Endothelial cell of umbilical vein (primary cell): ENCODE measurements at regions of chr12 and their contacts with region 1.

Region 1: DNA sequence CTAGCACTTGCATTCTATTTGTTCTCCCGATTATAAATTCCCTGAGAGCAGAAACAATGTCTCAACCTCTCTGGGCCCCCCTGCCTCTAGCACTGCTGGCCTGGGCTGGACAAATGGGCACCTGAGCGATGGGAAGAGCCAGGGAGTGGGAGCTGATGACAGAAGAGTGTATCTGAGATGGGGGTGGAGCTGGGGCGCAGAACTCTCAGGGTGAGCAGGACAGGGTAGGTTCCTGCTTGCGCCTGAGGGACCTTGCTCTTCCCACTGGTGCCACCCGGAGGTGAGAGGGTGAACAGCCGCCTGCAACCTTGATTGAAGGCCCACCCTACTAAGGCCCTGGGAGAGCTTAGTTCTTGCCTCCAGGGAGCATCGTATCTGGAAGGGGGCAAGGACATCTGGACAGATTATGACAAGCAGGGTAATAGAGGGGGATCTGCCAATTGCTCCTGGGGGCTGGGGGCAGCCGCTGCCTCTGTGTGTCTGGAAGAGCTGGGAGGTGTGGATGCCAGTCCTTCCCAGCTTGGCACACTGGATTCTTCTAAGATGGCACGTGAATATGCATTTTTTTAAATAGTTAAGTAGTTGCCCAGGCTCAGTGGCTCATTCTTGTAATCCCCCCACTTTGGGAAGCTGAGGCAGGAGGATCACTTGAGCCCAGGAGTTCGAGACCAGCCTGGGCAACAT is 43.0 kb upstream of the TSPAN9 start:
- DNase-seq: peak; percentile 78
- H3K4me3 ChIP-seq: no peak overlapping the region
- H3K27ac ChIP-seq: no peak overlapping the region
- H3K4me1 ChIP-seq: peaks cover 21% of the 10 kb centered on the region
- H3K27me3 ChIP-seq: no peaks in the 10 kb centered on the region
- CTCF ChIP-seq: peak; percentile 76 to 90
- POLR2A ChIP-seq: no peak

Region 2: GRCh38 chr12:1197264-1198018 is 1836.8 kb before region 1 on chr12:
- CTCF ChIA-PET with region 1: no interaction called
- POLR2A ChIA-PET with region 1: no interaction called
- dilution Hi-C with region 1: no loop called
- intact Hi-C with region 1: no loop called
- DNase-seq: no peak
- H3K4me3 ChIP-seq: no peak overlapping the region
- H3K27ac ChIP-seq: no peak overlapping the region
- H3K4me1 ChIP-seq: peaks cover 5% of the 10 kb centered on the region
- H3K27me3 ChIP-seq: no peaks in the 10 kb centered on the region
- CTCF ChIP-seq: no peak
- POLR2A ChIP-seq: no peak

Region 3: DNA sequence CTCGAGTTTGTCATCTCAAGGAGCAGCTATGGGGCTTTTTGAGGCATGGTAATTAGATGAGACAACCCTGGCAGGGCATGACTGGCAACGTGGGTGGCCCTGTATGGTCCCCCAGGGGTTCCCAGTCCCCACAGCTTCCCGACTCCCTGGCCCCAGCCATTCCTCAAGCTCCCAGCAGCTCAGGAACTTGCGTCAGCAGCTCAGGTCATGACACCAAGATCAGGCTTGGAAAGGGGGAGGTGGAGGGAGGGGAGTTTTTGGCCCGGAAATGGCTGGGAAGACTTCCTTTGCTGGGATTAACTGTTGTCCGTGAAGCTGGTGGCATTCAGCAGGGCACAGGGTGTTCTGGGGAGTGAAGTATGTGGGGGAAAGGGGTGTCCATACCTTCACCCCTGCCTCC is 188.9 kb before region 1 on chr12:
- CTCF ChIA-PET with region 1: interaction called, 20 read pairs
- POLR2A ChIA-PET with region 1: no interaction called
- dilution Hi-C with region 1: no loop called
- intact Hi-C with region 1: no loop called
- DNase-seq: peak; percentile 74
- H3K4me3 ChIP-seq: no peak overlapping the region
- H3K27ac ChIP-seq: peak overlapping the region; percentile 75
- H3K4me1 ChIP-seq: peaks cover 23% of the 10 kb centered on the region
- H3K27me3 ChIP-seq: no peaks in the 10 kb centered on the region
- CTCF ChIP-seq: no peak
- POLR2A ChIP-seq: peak; percentile 65

Region 4: GRCh38 chr12:2877047-2877952 is 156.9 kb before region 1 on chr12 and contains the starts of genes FOXM1 and RHNO1:
- CTCF ChIA-PET with region 1: interaction called, 21 read pairs
- POLR2A ChIA-PET with region 1: no interaction called
- dilution Hi-C with region 1: no loop called
- intact Hi-C with region 1: loop called (anchors 1 kb)
- DNase-seq: peak; percentile 90
- H3K4me3 ChIP-seq: peak within 1 kb of the TSS; percentile 56 to 99 (median 99)
- H3K27ac ChIP-seq: peak within 1 kb of the TSS; percentile 88
- H3K4me1 ChIP-seq: peaks cover 17% of the 10 kb centered on the region
- H3K27me3 ChIP-seq: no peaks in the 10 kb centered on the region
- CTCF ChIP-seq: peak in 1 of 2 donors; percentile 24
- POLR2A ChIP-seq: peak; percentile 81
- total RNA-seq, gene FOXM1: 110 and 136 TPM in 2 replicates
- total RNA-seq, gene RHNO1: 33.8 and 39.9 TPM in 2 replicates

Region 5: DNA sequence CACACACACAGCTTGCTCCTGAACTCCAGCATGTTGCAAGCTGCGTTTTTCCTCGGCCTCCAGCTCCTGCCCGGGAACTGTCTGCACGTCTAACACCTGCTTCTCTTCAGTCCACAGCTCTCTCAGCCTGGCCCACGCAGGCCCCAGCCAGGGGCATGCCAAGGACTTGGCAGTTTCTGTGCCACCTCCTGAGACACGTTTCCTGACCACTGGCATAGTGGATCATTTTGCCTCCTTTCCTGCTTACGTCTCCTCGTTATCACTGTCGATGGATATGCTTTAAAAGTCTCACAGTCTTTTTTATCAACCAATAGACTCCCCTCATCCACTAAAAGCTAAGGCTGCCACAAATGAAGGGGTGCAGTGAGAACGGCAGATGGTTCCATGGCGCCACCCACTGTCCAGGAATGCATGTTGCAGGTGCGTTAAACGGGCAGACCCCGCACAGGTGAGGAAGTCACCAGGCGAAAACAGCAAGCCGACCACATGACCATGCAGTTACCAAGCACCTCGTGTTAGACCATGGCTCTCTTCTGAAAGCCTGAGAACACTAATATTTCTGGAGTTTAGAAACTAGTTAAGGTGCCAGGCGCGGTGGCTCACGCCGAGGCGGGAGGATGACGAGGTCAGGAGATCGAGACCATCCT is 89.7 kb before region 1 on chr12:
- CTCF ChIA-PET with region 1: interaction called, 21 read pairs
- POLR2A ChIA-PET with region 1: no interaction called
- dilution Hi-C with region 1: no loop called
- intact Hi-C with region 1: loop called (anchors 5 kb)
- DNase-seq: peak; percentile 51
- H3K4me3 ChIP-seq: peak overlapping the region in 1 of 3 experiments; percentile 25
- H3K27ac ChIP-seq: no peak overlapping the region
- H3K4me1 ChIP-seq: peaks cover 3% of the 10 kb centered on the region
- H3K27me3 ChIP-seq: no peaks in the 10 kb centered on the region
- CTCF ChIP-seq: peak; percentile 67 to 84
- POLR2A ChIP-seq: no peak

Region 6: DNA sequence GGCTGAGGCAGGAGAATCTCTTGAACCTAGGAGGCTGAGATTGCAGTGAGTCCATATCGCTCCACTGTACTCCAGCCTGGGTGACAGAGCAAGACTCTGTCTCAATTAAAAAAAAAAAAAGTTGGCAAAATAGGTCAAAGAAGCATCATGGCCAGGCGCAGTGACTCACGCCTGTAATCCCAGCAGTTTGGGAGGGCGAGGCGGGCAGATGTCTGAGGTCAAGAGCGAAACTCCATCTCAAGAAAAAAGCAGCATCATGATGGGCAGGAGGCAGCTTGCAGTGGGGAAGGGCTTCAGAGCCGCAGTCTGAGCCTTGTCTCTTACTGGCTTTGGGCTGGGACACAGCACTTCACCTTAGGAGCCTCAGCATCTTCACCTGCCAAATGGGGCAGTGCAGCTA is 53.6 kb before region 1 on chr12:
- CTCF ChIA-PET with region 1: no interaction called
- POLR2A ChIA-PET with region 1: no interaction called
- dilution Hi-C with region 1: no loop called
- intact Hi-C with region 1: no loop called
- DNase-seq: no peak
- H3K4me3 ChIP-seq: no peak overlapping the region
- H3K27ac ChIP-seq: no peak overlapping the region
- H3K4me1 ChIP-seq: no peaks in the 10 kb centered on the region
- H3K27me3 ChIP-seq: no peaks in the 10 kb centered on the region
- CTCF ChIP-seq: no peak
- POLR2A ChIP-seq: no peak

Region 7: DNA sequence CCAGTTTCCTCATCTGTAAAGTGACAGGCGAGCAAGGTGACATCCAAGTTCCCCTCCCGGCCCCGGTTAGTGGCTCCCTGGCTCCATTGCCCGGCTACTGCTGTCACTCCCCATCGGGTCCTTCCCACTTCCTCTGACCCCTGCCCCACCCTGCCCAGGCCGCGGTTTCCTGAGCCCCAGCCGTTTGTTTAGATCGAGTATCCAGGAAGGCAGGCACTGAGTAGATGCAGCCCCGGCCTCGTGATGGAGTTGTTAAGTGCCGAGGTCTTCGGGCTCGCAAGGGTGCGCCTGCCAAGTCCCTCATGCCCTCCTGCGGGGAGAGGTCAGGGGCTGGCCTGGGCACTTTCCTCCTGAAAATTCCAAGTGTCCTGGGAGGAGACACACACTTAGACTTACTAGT is 19.6 kb before region 1 on chr12:
- CTCF ChIA-PET with region 1: interaction called, 3 read pairs
- POLR2A ChIA-PET with region 1: no interaction called
- dilution Hi-C with region 1: no loop called
- intact Hi-C with region 1: loop called (anchors 2 kb)
- DNase-seq: no peak
- H3K4me3 ChIP-seq: no peak overlapping the region
- H3K27ac ChIP-seq: peak overlapping the region; percentile 45
- H3K4me1 ChIP-seq: peaks cover 20% of the 10 kb centered on the region
- H3K27me3 ChIP-seq: no peaks in the 10 kb centered on the region
- CTCF ChIP-seq: no peak
- POLR2A ChIP-seq: no peak

Region 8: GRCh38 chr12:3409662-3410061 is 375.5 kb after region 1 on chr12:
- CTCF ChIA-PET with region 1: no interaction called
- POLR2A ChIA-PET with region 1: no interaction called
- dilution Hi-C with region 1: no loop called
- intact Hi-C with region 1: no loop called
- DNase-seq: no peak
- H3K4me3 ChIP-seq: no peak overlapping the region
- H3K27ac ChIP-seq: no peak overlapping the region
- H3K4me1 ChIP-seq: no peaks in the 10 kb centered on the region
- H3K27me3 ChIP-seq: no peaks in the 10 kb centered on the region
- CTCF ChIP-seq: no peak
- POLR2A ChIP-seq: no peak